IMR-90 (cell line): ENCODE measurements at regions of chr21 and their contacts with region 1.

Region 1: GRCh38 chr21:35940074-35940927 is 120.0 kb downstream of the SETD4 start:
- DNase-seq: peak; percentile 81
- ATAC-seq: peak; percentile 100
- H3K4me3 ChIP-seq: no peak overlapping the region
- H3K27ac ChIP-seq: no peak overlapping the region
- H3K4me1 ChIP-seq: no peaks in the 10 kb centered on the region
- H3K27me3 ChIP-seq: no peaks in the 10 kb centered on the region; the same call in 1 of the 2 replicates
- CTCF ChIP-seq: peak; percentile 88
- POLR2A ChIP-seq: no peak
- RAD21 ChIP-seq: peak; percentile 93

Region 2: GRCh38 chr21:34693192-34693810 is 1247.0 kb before region 1 on chr21:
- CTCF ChIA-PET with region 1: no interaction called
- POLR2A ChIA-PET with region 1: no interaction called
- dilution Hi-C with region 1: no loop called
- in situ Hi-C with region 1: no loop called
- intact Hi-C with region 1: loop called (anchors 2 kb)
- DNase-seq: peak; percentile 74
- ATAC-seq: peak; percentile 80
- H3K4me3 ChIP-seq: no peak overlapping the region
- H3K27ac ChIP-seq: no peak overlapping the region
- H3K4me1 ChIP-seq: no peaks in the 10 kb centered on the region
- H3K27me3 ChIP-seq: peaks cover 36% of the 10 kb centered on the region
- CTCF ChIP-seq: peak; percentile 84
- POLR2A ChIP-seq: no peak
- RAD21 ChIP-seq: peak; percentile 89

Region 3: GRCh38 chr21:35508139-35508888 is 432.0 kb before region 1 on chr21:
- CTCF ChIA-PET with region 1: no interaction called
- POLR2A ChIA-PET with region 1: no interaction called
- dilution Hi-C with region 1: no loop called
- in situ Hi-C with region 1: no loop called
- intact Hi-C with region 1: loop called (anchors 10 kb)
- DNase-seq: peak; percentile 65
- ATAC-seq: peak; percentile 75
- H3K4me3 ChIP-seq: no peak overlapping the region
- H3K27ac ChIP-seq: no peak overlapping the region
- H3K4me1 ChIP-seq: peaks cover 10% of the 10 kb centered on the region
- H3K27me3 ChIP-seq: no peaks in the 10 kb centered on the region
- CTCF ChIP-seq: peak; percentile 36
- POLR2A ChIP-seq: no peak
- RAD21 ChIP-seq: peak; percentile 44; the same call in 1 of the 2 replicates

Region 4: DNA sequence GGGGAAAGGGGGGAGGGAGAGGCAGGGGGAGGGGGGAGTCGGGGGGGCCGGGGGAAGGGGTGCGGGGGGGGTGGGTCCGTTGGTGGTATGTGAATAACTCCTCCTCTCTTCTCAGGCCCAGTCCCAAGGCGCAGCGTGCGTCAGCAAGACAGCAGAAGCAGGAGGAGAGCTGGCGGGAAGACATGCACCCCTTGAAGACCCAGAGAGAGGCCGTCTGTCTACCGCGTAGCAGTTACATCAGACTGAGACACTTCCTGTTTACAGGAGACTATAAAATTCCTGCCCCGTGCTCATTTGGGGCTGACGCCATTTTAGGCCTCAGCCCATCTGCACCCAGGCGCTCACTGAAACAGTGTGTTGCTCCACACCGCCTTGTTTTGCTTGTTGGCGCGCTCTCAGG is 64.7 kb after region 1 on chr21:
- CTCF ChIA-PET with region 1: no interaction called
- POLR2A ChIA-PET with region 1: no interaction called
- dilution Hi-C with region 1: no loop called
- in situ Hi-C with region 1: no loop called
- intact Hi-C with region 1: no loop called
- DNase-seq: peak; percentile 42
- ATAC-seq: no peak
- H3K4me3 ChIP-seq: no peak overlapping the region
- H3K27ac ChIP-seq: no peak overlapping the region
- H3K4me1 ChIP-seq: 0 out of 2 replicates have a peak, but pooled peaks cover 2% of the 10 kb centered on the region
- H3K27me3 ChIP-seq: peaks cover 25% of the 10 kb centered on the region
- CTCF ChIP-seq: no peak
- POLR2A ChIP-seq: no peak
- RAD21 ChIP-seq: no peak

Region 5: DNA sequence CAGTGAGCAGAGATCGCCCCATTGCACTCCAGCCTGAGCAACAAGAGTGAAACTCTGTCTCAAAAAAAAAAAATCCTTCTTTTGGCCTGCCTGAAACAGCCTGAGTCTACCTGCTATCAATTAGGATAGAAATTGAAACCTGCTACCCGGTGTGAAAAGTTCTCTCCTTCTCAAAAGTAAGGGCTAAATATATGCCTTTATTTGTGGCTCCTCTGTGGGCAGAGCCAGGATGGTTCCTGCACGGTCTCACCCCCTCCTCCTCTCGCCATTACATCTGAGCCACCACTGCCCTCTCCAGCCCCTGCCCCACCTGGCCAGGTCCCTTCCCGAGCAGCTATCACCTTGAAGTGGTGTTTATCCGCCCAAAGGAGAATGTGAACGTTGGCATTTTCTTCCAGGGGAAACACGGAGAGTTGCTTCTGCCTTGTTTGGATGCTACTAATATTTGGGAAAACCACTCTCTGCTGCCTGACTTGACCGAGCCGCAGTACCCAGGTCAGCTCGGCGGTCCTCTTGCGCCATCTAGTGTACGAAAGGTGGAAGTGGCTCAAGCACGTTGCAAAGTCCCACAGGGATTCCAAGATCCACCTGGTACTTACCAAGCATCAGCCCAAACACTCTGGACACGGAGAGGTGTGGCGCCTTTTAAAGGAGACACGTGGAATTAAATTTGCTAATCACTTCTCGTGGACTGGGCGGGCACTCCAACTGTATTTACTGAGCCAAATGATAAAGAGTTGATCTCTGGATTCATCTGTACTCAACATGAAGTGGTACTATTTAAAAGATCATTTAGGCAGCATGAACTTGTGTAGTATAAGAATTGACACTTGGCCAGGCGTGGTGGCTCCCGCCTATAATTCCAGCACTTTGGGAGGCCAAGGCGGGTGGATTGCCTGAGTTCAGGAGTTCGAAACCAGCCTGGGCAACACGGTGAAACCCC is 88.1 kb after region 1 on chr21:
- CTCF ChIA-PET with region 1: no interaction called
- POLR2A ChIA-PET with region 1: no interaction called
- dilution Hi-C with region 1: no loop called
- in situ Hi-C with region 1: no loop called
- intact Hi-C with region 1: loop called (anchors 2 kb)
- DNase-seq: peak; percentile 73
- ATAC-seq: peak; percentile 97
- H3K4me3 ChIP-seq: no peak overlapping the region
- H3K27ac ChIP-seq: no peak overlapping the region
- H3K4me1 ChIP-seq: peaks cover 7% of the 10 kb centered on the region
- H3K27me3 ChIP-seq: no peaks in the 10 kb centered on the region
- CTCF ChIP-seq: peak; percentile 97
- POLR2A ChIP-seq: no peak
- RAD21 ChIP-seq: peak; percentile 98

Region 6: GRCh38 chr21:36113647-36114428 is 173.5 kb after region 1 on chr21:
- CTCF ChIA-PET with region 1: no interaction called
- POLR2A ChIA-PET with region 1: no interaction called
- dilution Hi-C with region 1: no loop called
- in situ Hi-C with region 1: no loop called
- intact Hi-C with region 1: loop called (anchors 10 kb)
- DNase-seq: no peak
- ATAC-seq: no peak
- H3K4me3 ChIP-seq: no peak overlapping the region
- H3K27ac ChIP-seq: no peak overlapping the region
- H3K4me1 ChIP-seq: 0 out of 2 replicates have a peak, but pooled peaks cover 2% of the 10 kb centered on the region
- H3K27me3 ChIP-seq: peaks cover 3% of the 10 kb centered on the region
- CTCF ChIP-seq: no peak
- POLR2A ChIP-seq: no peak
- RAD21 ChIP-seq: no peak